ENCODE measurements at regions of chr3 and their contacts with region 1.

Region 1: DNA sequence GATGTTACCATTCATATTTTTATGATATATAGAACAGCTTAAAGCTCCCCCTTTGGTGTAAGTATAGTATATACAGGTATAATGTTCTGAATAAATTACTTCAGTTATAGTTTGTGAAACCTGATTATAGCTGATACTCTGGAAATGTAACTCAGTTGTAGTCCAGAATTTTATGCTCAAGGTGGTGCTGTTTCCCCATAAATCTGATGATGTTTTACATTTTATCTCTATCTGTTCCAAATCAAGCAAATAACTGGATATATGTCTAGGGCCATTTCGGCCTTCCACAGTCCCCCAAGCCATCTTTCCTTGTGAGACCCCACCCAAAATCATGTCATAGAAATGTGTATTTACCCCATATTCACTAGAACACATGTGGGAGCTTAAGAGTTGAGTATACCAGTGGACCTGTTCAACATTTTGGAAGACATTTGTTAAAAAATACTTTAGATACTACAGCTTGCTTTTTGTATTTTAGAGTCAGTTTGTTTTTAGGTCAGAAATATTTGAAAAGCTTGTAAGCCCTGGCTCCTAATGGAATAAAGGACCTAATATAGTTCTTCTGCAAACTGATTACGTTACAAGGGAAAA is 107.1 kb downstream of the ATG7 start:
- ATAC-seq: peak; percentile 62 to 82 (median 70)
- H3K4me3 ChIP-seq: no peak overlapping the region
- H3K27ac ChIP-seq: no peak overlapping the region
- H3K4me1 ChIP-seq: peaks cover 19 to 21% of the 10 kb centered on the region in 2 donors

Region 2: GRCh38 chr3:11509173-11510000 is 130.1 kb after region 1 on chr3:
- in situ Hi-C with region 1: loop called in 1 of 9 experiments (anchors 25 kb)
- ATAC-seq: peak; percentile 66 to 96 (median 86)
- H3K4me3 ChIP-seq: peak overlapping the region in 1 of 5 donors; percentile 18
- H3K27ac ChIP-seq: peak overlapping the region; percentile 75 to 85
- H3K4me1 ChIP-seq: peaks cover 33 to 34% of the 10 kb centered on the region in 2 donors

Region 3: DNA sequence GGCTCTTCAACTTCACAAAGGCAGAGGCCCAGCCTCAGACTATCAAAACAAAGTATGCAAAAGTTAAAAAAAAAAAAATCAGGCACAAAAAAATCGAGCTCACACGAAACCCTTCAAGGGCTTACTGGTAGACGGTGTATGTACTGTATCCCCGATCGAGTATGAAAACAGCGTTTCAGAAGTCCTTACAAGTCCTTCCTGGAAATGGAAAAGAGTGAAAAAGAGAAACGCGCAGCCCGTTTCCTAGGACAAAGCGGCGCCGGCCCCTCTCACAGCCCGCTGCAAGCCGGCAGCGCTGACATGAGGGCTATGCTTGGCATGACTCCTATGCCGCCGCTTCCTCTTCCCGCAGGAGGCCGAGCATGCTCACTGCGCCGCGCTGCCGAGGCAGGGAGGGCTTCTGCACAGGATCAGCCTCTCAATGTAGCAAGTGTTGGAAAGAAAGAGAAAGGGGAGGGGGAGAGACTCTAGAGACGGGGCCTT is 264.3 kb after region 1 on chr3 and contains the start of gene VGLL4:
- in situ Hi-C with region 1: loop called in 2 of 9 experiments (anchors 10 to 25 kb)
- ATAC-seq: peak; percentile 70 to 88 (median 82)
- H3K4me3 ChIP-seq: peak within 1 kb of the TSS; percentile 44 to 68 (median 48)
- H3K27ac ChIP-seq: peak within 1 kb of the TSS; percentile 83 to 87
- H3K4me1 ChIP-seq: peaks cover 22 to 29% of the 10 kb centered on the region in 2 donors
- total RNA-seq, gene VGLL4: 23.6 to 98.2 (median 42.4) TPM

Region 4: GRCh38 chr3:11651900-11652299 is 272.6 kb after region 1 on chr3:
- in situ Hi-C with region 1: loop called (anchors 10 to 25 kb)
- ATAC-seq: no peak
- H3K4me3 ChIP-seq: no peak overlapping the region
- H3K27ac ChIP-seq: no peak overlapping the region
- H3K4me1 ChIP-seq: no peaks in the 10 kb centered on the region

Region 5: GRCh38 chr3:11803977-11804892 is 424.9 kb after region 1 on chr3:
- in situ Hi-C with region 1: loop called in 4 of 9 experiments (anchors 25 kb)
- ATAC-seq: peak in 4 of 8 experiments; percentile 44 to 86 (median 80)
- H3K4me3 ChIP-seq: no peak overlapping the region
- H3K27ac ChIP-seq: no peak overlapping the region
- H3K4me1 ChIP-seq: no peaks in the 10 kb centered on the region

Region 6: GRCh38 chr3:11835028-11835639 is 455.8 kb after region 1 on chr3:
- in situ Hi-C with region 1: loop called in 2 of 9 experiments (anchors 10 to 25 kb)
- ATAC-seq: peak in 1 of 8 experiments; percentile 13
- H3K4me3 ChIP-seq: no peak overlapping the region
- H3K27ac ChIP-seq: no peak overlapping the region
- H3K4me1 ChIP-seq: peaks cover 0 to 4% of the 10 kb centered on the region in 2 donors

Region 7: DNA sequence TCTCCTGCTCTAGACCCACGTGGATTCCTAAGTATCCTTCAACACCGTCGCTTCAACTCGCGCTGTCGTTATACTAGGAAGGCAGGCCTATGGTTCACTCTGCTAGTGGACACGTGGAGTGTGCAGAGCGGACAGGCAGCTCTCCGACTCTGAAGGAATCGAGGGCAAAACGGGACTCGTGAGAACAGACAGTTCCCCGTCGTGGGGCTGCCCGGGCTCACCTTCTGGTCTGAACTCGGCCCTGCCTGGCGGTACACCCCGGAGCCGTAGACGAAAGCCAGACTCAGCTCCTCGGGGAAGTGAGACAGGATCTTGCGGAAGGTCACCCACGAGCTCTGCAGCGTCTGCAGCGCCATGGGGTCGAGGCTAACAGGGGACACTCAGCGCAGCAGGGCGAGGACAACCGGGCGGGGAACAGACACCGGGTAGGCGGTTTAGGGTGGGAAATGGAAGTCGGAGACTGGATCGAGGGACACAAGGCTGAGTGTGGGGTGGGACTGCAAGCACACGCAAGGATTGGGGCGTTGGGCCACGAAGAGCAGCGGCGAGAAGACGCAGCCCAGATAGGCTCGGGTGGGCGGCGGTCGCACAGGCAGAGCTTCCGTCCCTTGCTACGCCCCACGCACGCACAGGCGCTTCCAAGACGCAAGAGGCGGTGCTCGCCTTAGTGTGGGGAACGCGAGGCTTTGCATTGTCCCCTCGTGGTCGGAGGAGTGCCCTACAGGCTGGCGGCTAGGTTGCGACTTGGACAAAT is 467.1 kb after region 1 on chr3 and contains the start of gene TAMM41:
- in situ Hi-C with region 1: loop called in 1 of 9 experiments (anchors 25 kb)
- ATAC-seq: peak; percentile 95 to 100 (median 100)
- H3K4me3 ChIP-seq: peak within 1 kb of the TSS; percentile 61 to 93 (median 70)
- H3K27ac ChIP-seq: peak within 1 kb of the TSS; percentile 57 to 74
- H3K4me1 ChIP-seq: peaks cover 9 to 17% of the 10 kb centered on the region in 2 donors
- total RNA-seq, gene TAMM41: 8.8 to 35.0 (median 12.1) TPM

Measured in motor neuron (in vitro differentiated cells).